Activated T-helper 2 cell treated with anti-CD3 and anti-CD28 coated beads, Interferon-gamma antibody, Interleukin-2, Interleukin-4, amounts not matched to agents 10 μg/mL and 5 μg/mL and 100 μg/mL, durations not matched to agents 14 hours and 24 hours and 36 hours (primary cell): ENCODE measurements at regions of chr20 and their contacts with region 1.

Region 1: DNA sequence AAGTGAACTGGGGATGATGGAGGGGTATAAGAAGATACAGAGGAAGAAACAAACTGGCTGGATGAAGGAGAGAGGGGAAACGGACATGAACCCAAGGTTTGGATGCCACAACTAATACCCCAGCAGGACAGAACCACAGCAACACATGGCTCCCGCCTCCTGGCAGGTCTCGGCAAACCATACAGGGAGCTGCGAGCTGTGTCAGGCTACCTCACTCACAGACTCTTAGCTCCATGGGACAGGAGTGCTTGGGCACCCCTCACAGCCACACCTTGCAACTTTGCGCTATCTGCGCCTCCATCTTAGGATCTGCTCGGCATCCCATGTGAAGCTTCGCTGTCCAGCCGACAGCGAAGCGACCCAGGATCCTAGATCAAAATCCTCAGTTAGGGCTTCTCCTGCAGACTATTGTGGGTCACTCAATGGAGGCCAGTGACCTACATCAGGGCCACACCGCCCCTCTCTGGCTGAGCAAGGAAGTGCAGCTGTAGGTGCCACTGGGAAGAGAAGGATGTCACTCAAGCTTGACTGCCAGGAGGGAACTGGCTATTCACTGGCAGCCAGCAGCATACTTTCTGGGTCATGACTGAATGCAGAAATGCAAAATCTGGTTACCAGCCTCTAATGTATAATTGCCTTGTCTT is 174.4 kb upstream of the RIN2 start:
- DNase-seq: peak; percentile 16
- H3K4me3 Mint-ChIP-seq: no peak overlapping the region
- H3K27ac Mint-ChIP-seq: no peak overlapping the region
- H3K4me1 Mint-ChIP-seq: no peaks in the 10 kb centered on the region
- H3K27me3 Mint-ChIP-seq: peaks cover 2% of the 10 kb centered on the region

Region 2: GRCh38 chr20:19205977-19206396 is 377.7 kb before region 1 on chr20:
- intact Hi-C with region 1: loop called (anchors 1 kb)
- DNase-seq: peak; percentile 48
- H3K4me3 Mint-ChIP-seq: no peak overlapping the region
- H3K27ac Mint-ChIP-seq: no peak overlapping the region
- H3K4me1 Mint-ChIP-seq: no peaks in the 10 kb centered on the region
- H3K27me3 Mint-ChIP-seq: peaks cover 14% of the 10 kb centered on the region